Endothelial cell of umbilical vein (primary cell): ENCODE measurements at regions of chr17 and their contacts with region 1.

Region 1: DNA sequence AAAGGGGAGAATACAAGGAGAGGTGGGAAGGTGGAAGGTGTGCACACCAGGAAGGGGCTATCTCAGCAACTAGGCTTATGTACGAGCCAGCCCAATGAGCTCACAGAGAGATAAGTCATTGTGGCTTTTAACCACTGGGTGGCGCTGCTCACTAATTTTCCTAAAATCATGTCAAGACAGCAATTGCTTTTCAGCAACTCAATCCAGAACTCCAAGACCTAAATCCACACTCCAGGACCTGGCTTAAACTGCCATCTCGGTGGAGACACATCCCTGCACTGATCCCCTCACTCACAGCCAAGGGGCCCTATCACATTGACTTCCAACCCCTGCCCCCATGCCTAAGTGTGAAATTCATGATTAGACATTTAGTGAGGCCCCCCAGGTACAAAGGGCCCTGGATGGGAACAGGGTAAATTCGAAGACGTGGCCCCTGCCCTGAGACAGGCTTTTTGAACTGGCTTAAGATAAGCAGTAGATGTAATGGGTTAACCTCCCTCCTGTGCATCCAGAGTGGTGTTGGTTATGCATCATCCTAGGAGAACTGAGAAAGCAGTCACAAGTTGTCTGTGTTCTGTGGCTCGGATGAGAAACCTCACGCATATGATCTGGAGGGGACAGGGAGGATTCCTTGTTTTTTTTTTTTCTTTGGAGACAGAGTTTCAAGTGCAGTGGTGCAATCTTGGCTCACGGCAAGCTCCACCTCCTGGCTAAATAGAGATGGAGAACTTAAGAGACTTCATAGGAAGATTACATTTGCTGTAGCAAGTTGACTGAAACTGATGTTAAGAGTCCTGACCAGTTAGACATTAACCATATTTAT is 11.5 kb downstream of the CCL16 start:
- DNase-seq: peak; percentile 85
- H3K4me3 ChIP-seq: no peak overlapping the region
- H3K27ac ChIP-seq: no peak overlapping the region
- H3K4me1 ChIP-seq: peaks cover 32% of the 10 kb centered on the region
- H3K27me3 ChIP-seq: no peaks in the 10 kb centered on the region
- CTCF ChIP-seq: peak; percentile 69 to 76
- POLR2A ChIP-seq: no peak

Region 2: DNA sequence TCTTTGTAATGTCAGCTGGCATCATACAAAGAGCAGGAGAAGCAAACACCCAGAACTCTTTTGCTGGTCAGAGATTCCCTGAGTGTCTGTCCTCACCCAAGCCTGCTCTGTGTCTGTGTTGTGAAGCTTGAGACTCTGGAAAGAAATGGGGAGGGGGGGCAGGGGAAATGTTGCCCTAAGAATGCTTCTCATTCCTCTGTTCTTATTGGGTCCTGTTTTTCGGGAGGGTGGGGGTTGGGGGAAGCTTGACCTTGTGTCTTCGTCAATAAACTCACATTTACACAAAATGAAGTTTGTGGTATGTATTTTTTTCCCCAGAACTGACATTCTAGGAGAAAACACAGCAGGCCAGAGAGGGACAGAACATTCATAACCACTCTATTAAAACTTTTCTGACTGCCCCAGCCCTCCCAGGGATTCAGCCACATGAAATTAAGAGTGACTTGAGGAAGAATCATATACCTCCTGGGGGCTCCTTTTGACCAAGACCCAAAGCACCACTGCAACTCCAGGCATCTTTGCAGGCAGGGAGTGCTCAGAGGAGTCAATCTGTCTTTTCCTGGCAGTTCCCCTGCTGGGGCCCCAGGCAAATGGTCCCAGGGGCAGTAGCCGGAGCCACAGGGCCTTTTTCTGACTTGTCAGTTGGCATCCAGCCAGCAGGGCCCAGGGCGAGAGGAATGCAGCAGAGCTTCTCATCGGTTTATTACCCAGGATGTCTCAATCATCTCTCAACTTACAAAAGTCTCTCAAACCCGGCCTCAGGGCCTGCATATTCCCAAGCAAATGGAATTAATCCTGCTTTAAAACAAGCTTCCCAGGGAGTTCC is 243.4 kb before region 1 on chr17:
- CTCF ChIA-PET with region 1: no interaction called
- POLR2A ChIA-PET with region 1: no interaction called
- dilution Hi-C with region 1: no loop called
- intact Hi-C with region 1: no loop called
- DNase-seq: no peak
- H3K4me3 ChIP-seq: no peak overlapping the region
- H3K27ac ChIP-seq: no peak overlapping the region
- H3K4me1 ChIP-seq: peaks cover 4% of the 10 kb centered on the region
- H3K27me3 ChIP-seq: no peaks in the 10 kb centered on the region
- CTCF ChIP-seq: no peak
- POLR2A ChIP-seq: no peak

Region 3: GRCh38 chr17:35849469-35850348 is 120.1 kb before region 1 on chr17:
- CTCF ChIA-PET with region 1: interaction called, 7 read pairs
- POLR2A ChIA-PET with region 1: no interaction called
- dilution Hi-C with region 1: no loop called
- intact Hi-C with region 1: loop called (anchors 1 kb)
- DNase-seq: peak; percentile 65
- H3K4me3 ChIP-seq: no peak overlapping the region
- H3K27ac ChIP-seq: no peak overlapping the region
- H3K4me1 ChIP-seq: no peaks in the 10 kb centered on the region
- H3K27me3 ChIP-seq: no peaks in the 10 kb centered on the region
- CTCF ChIP-seq: peak; percentile 68 to 75
- POLR2A ChIP-seq: no peak

Region 4: GRCh38 chr17:35915153-35915969 is 54.4 kb before region 1 on chr17:
- CTCF ChIA-PET with region 1: no interaction called
- POLR2A ChIA-PET with region 1: no interaction called
- dilution Hi-C with region 1: no loop called
- intact Hi-C with region 1: no loop called
- DNase-seq: no peak
- H3K4me3 ChIP-seq: no peak overlapping the region
- H3K27ac ChIP-seq: no peak overlapping the region
- H3K4me1 ChIP-seq: peaks cover 4% of the 10 kb centered on the region
- H3K27me3 ChIP-seq: peaks cover 0 to 2% of the 10 kb centered on the region in 2 experiments
- CTCF ChIP-seq: no peak
- POLR2A ChIP-seq: no peak

Region 5: DNA sequence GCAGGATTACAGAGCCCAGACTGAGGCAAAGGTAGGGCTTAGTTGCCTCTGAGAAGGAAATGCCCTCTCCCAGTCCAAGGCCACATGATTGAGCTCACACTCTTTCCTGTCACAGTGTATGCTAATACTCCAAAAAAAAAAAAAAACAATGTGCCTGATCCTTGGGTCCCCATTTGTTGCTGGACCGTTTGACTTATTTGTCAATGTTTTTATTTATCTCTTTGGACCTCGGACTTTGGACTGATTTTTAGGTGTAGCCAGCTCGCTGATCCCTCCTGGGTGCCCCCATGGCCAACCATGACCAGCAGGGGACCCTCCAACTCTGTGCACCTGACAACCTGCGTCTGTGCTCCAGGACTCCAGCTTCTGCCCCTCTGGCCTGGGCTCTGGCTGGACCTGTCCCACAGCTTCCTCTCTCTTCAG is 12.2 kb after region 1 on chr17:
- CTCF ChIA-PET with region 1: interaction called, 21 read pairs
- POLR2A ChIA-PET with region 1: no interaction called
- dilution Hi-C with region 1: no loop called
- intact Hi-C with region 1: no loop called
- DNase-seq: no peak
- H3K4me3 ChIP-seq: no peak overlapping the region
- H3K27ac ChIP-seq: no peak overlapping the region
- H3K4me1 ChIP-seq: peaks cover 24% of the 10 kb centered on the region
- H3K27me3 ChIP-seq: no peaks in the 10 kb centered on the region
- CTCF ChIP-seq: peak in 1 of 2 donors; percentile 11
- POLR2A ChIP-seq: no peak

Region 6: DNA sequence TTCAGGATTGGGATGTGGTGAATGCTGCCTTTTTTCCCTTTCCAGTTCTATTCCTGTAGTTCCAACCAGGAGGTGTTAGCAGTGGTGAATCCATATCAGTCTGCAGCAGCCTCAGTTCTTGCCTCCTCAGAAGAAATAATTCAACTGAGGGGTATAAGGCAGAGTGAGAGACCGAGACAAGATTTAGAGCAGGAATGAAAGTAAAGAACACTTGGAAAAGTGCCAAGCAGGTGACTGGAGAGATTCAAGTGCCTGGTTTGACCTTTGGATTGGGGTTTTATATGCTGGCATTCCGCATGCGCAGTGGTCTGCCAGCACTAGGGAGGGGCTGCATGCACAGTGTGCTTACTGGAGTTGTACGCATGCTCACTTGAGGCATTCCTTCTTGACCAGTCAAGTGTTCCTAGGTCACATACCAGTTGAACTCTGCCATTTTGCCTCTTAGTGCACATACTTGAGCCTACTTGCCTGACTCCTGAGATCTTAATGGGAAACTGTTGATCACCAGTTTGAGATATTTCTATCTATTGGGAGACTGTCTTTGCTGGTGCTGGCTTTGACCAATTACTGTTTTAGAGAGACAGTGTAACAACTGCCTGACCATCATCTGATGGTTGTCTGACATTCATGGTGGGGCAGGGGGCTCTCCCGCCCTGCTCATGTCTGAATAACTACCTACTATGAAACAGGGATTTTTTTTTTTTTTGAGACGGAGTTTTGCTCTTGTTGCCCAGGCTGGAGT is 32.3 kb after region 1 on chr17:
- CTCF ChIA-PET with region 1: interaction called, 44 read pairs
- POLR2A ChIA-PET with region 1: no interaction called
- dilution Hi-C with region 1: no loop called
- intact Hi-C with region 1: no loop called
- DNase-seq: no peak
- H3K4me3 ChIP-seq: no peak overlapping the region
- H3K27ac ChIP-seq: no peak overlapping the region
- H3K4me1 ChIP-seq: no peaks in the 10 kb centered on the region
- H3K27me3 ChIP-seq: peaks cover 0 to 2% of the 10 kb centered on the region in 2 experiments
- CTCF ChIP-seq: no peak
- POLR2A ChIP-seq: no peak

Region 7: GRCh38 chr17:36057911-36058310 is 88.1 kb after region 1 on chr17:
- CTCF ChIA-PET with region 1: interaction called, 10 read pairs
- POLR2A ChIA-PET with region 1: no interaction called
- dilution Hi-C with region 1: no loop called
- intact Hi-C with region 1: no loop called
- DNase-seq: no peak
- H3K4me3 ChIP-seq: no peak overlapping the region
- H3K27ac ChIP-seq: no peak overlapping the region
- H3K4me1 ChIP-seq: no peaks in the 10 kb centered on the region
- H3K27me3 ChIP-seq: peaks cover 0 to 4% of the 10 kb centered on the region in 2 experiments
- CTCF ChIP-seq: no peak
- POLR2A ChIP-seq: no peak

Region 8: GRCh38 chr17:36072431-36073121 is 102.8 kb after region 1 on chr17:
- CTCF ChIA-PET with region 1: interaction called, 467 read pairs
- POLR2A ChIA-PET with region 1: interaction called, 5 read pairs
- dilution Hi-C with region 1: no loop called
- intact Hi-C with region 1: loop called (anchors 1 kb)
- DNase-seq: peak; percentile 58
- H3K4me3 ChIP-seq: no peak overlapping the region
- H3K27ac ChIP-seq: no peak overlapping the region
- H3K4me1 ChIP-seq: no peaks in the 10 kb centered on the region
- H3K27me3 ChIP-seq: peaks cover 4 to 10% of the 10 kb centered on the region in 2 experiments
- CTCF ChIP-seq: peak; percentile 73 to 82
- POLR2A ChIP-seq: no peak

Region 9: DNA sequence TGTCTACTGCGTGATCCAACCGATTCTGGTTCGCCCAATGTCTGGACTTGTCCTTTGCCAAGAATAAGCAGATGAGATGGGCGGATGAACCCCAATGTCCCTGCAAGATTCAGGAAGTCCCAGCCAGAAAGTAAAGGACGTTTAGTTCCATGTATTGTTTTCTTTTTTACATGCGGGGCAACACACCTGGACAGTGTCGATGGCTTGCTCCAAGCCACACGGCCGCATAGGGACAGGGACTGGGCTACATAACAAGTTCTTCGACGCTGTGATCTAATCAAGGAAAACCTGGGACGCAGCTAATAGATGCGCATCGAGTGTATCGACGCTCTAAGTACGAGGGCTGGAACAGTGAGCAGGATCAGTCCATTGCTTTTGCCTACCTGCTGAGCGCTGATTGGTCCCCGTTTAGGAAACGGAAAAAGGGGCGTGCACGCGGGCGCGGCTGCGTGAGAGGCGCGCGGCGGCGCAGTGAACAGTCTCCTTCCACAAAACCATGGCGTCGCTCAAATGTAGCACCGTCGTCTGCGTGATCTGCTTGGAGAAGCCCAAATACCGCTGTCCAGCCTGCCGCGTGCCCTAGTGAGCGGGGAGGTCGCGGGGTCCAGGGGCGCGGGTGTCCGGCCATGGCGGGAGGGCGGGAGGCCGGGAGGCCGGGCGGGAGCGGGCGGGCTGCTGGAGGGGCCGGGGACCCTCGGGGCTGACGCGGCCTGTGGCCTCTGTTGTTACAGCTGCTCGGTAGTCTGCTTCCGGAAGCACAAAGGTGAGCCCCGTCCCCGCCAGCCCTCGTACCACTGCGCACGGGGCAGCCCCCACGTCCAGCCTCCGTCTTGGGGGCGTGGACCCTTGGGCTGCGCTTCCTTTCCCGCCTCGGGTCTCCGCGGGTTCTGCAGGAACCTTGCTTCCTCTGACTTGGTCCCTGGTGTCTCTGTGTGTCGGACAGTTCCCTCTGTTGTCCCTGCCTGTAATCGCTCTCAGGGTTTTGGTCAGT is 516.7 kb after region 1 on chr17 and contains the start of gene ZNHIT3:
- CTCF ChIA-PET with region 1: interaction called, 27 read pairs
- POLR2A ChIA-PET with region 1: no interaction called
- dilution Hi-C with region 1: no loop called
- intact Hi-C with region 1: no loop called
- DNase-seq: peak; percentile 94
- H3K4me3 ChIP-seq: peak within 1 kb of the TSS; percentile 36 to 96 (median 82)
- H3K27ac ChIP-seq: peak within 1 kb of the TSS; percentile 3
- H3K4me1 ChIP-seq: peaks cover 17% of the 10 kb centered on the region
- H3K27me3 ChIP-seq: peaks cover 0 to 9% of the 10 kb centered on the region in 2 experiments
- CTCF ChIP-seq: no peak
- POLR2A ChIP-seq: peak; percentile 75
- total RNA-seq, gene ZNHIT3: 31.4 and 34.0 TPM in 2 replicates